ENCODE measurements at regions of chr13 and their contacts with region 1.

Region 1: GRCh38 chr13:51803422-51804294 is at the start of gene DHRS12:
- DNase-seq: peak; percentile 95
- H3K4me3 Mint-ChIP-seq: peak within 1 kb of the TSS; percentile 97
- H3K27ac Mint-ChIP-seq: peak within 1 kb of the TSS; percentile 98
- H3K4me1 Mint-ChIP-seq: peaks cover 39% of the 10 kb centered on the region
- H3K27me3 Mint-ChIP-seq: no peaks in the 10 kb centered on the region
- total RNA-seq, gene DHRS12: 3.2 and 3.9 TPM in 2 replicates

Region 2: DNA sequence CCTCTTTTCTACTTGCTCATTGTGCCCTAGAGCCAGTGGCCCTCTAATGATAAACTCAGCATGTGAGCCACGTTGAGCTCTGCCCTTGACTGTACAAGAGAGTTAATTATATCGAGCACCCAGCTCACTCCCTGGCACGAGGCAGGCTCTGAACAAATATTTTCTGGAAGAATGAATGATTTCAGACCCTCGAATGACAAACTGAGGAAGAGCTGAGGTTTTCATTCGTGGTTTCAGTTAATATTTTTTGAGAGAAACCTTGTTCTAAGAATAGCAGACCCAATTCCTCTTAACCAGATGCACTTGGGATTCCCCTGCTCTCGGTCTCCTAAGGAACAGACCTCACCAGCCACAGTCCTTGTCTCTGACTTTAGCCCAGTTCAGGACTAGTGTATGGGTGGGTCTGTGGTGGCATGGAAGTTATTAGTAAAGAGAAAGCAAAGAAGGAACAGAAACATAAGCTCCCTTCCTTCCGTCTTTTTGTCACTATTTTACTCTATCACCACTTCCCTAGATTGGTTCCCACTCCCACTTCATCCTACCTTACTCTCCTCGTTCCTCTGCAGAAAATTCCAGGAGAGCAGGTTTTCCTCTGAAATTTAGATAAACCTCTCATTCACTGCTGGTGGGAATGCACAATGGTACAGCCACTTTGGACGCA is 241.5 kb before region 1 on chr13:
- intact Hi-C with region 1: no loop called
- DNase-seq: peak; percentile 62
- H3K4me3 Mint-ChIP-seq: no peak overlapping the region
- H3K27ac Mint-ChIP-seq: no peak overlapping the region
- H3K4me1 Mint-ChIP-seq: peaks cover 30% of the 10 kb centered on the region
- H3K27me3 Mint-ChIP-seq: peaks cover 2% of the 10 kb centered on the region

Region 3: GRCh38 chr13:51729866-51730546 is 73.7 kb before region 1 on chr13:
- intact Hi-C with region 1: loop called (anchors 2 kb)
- DNase-seq: peak; percentile 74
- H3K4me3 Mint-ChIP-seq: no peak overlapping the region
- H3K27ac Mint-ChIP-seq: no peak overlapping the region
- H3K4me1 Mint-ChIP-seq: peaks cover 11% of the 10 kb centered on the region
- H3K27me3 Mint-ChIP-seq: no peaks in the 10 kb centered on the region

Region 4: GRCh38 chr13:51740698-51741097 is 63.0 kb before region 1 on chr13:
- intact Hi-C with region 1: no loop called
- DNase-seq: no peak
- H3K4me3 Mint-ChIP-seq: peak overlapping the region; percentile 14
- H3K27ac Mint-ChIP-seq: no peak overlapping the region
- H3K4me1 Mint-ChIP-seq: peaks cover 22% of the 10 kb centered on the region
- H3K27me3 Mint-ChIP-seq: no peaks in the 10 kb centered on the region

Region 5: GRCh38 chr13:51764184-51765141 is 39.2 kb before region 1 on chr13:
- intact Hi-C with region 1: loop called (anchors 1 kb)
- DNase-seq: peak; percentile 86
- H3K4me3 Mint-ChIP-seq: peak overlapping the region; percentile 88
- H3K27ac Mint-ChIP-seq: peak overlapping the region; percentile 96
- H3K4me1 Mint-ChIP-seq: peaks cover 39% of the 10 kb centered on the region
- H3K27me3 Mint-ChIP-seq: no peaks in the 10 kb centered on the region

Region 6: GRCh38 chr13:51825165-51825592 is 21.5 kb after region 1 on chr13:
- intact Hi-C with region 1: loop called (anchors 1 kb)
- DNase-seq: peak; percentile 79
- H3K4me3 Mint-ChIP-seq: peak overlapping the region; percentile 73
- H3K27ac Mint-ChIP-seq: peak overlapping the region; percentile 84
- H3K4me1 Mint-ChIP-seq: peaks cover 64% of the 10 kb centered on the region
- H3K27me3 Mint-ChIP-seq: peaks cover 3% of the 10 kb centered on the region

Region 7: DNA sequence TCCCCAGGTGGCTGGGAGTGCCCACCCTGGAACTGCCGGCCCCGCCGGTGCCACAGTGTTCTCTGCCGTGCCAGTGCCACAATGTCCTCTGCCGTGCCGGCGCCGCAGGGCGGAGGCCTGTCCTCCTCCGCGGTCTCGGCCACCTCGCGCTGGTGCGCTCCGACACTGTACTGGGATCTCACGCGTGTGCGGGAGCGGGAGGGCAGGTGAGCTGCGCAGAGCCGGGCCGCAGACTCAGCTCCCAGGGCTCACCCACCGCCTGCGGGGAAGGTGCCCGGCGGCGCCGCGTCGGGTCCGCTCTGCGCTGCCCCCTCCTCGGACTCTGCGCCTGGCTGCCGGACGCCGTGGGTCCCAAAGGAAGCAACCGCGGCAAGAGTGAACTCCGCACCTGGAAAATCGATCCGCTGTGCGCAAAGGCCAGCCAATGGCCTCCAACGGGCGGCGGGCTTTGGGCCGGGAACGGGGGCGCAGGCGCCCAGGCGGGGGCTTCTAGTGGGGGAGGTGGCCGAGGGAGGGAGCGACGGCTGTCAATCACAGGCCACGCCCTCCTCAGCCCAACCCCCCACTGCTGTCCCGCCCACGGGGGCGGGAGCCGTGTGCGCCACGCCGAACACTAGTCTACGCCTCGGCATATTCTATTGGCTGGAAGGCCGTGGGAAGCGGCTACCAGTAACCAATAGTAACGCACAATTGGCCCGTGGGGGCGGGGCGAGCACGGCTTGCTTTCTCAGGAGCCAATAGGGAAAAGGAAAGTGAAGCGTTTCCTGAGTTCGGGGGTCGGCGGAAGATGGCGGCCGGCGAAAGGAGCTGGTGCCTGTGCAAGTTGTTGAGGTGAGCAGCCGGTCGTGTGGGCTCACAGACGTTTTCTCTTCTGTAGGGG is 208.2 kb after region 1 on chr13 and contains the start of gene ALG11:
- intact Hi-C with region 1: loop called (anchors 5 kb)
- DNase-seq: peak; percentile 100
- H3K4me3 Mint-ChIP-seq: peak within 1 kb of the TSS; percentile 99
- H3K27ac Mint-ChIP-seq: peak within 1 kb of the TSS; percentile 93
- H3K4me1 Mint-ChIP-seq: peaks cover 8% of the 10 kb centered on the region
- H3K27me3 Mint-ChIP-seq: peaks cover 34% of the 10 kb centered on the region
- total RNA-seq, gene ALG11: 26.7 and 28.0 TPM in 2 replicates